Posterior cingulate gyrus (tissue), 11 donors: ENCODE measurements at regions of chr13 and their contacts with region 1.

Region 1: DNA sequence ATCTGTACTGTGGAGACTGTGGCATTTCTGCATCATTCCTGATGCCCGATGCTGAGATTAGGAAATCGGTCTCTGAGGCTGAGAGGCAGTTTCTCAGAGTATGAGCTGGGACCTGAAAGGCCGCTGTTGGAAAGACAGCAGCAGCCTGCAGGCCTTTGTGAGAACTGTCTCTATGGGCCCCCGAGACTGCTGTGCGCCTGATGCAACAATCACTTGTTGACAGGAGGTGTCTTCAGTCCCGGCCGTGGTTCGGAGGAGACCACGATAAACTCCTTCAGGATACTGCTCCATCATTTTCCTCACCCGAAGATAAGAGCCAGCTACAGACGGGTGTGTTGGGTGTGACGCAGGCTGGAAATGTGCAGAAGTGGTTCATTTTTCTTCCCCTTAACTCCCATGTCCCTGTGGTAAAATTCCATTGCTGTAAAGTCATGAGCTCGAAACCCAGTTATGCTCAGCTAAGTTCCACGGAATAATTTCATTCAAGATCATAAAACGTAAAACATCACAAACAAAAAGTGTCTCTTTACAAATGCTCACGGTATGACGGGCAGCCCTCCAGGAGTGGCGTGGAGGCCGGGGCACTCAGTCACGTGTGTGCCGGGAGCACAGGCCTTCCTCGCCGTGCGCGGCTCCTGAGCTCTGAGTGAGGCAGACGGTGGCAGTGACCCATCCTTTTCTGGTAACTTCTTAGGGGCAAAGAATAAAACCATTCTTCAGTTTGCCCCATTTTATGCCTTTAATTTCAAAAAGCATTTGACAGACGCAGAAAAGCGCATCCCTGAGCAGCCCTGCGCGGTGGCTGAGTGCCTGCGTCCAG is 72.6 kb downstream of the ATP11A start:
- DNase-seq: peak in 4 of 10 donors; percentile 35 to 79 (median 60)

Region 2: GRCh38 chr13:112689303-112690165 is 72.9 kb before region 1 on chr13 and contains the start of gene ATP11A:
- intact Hi-C with region 1: loop called (anchors 5 kb)
- DNase-seq: peak; percentile 83 to 99 (median 90)